ENCODE measurements at regions of chr10 and their contacts with region 1.

Region 1: GRCh38 chr10:123257904-123258456 is 103.8 kb downstream of the BUB3 start:
- DNase-seq: no peak
- H3K4me3 ChIP-seq: no peak overlapping the region
- H3K27ac ChIP-seq: no peak overlapping the region
- H3K4me1 ChIP-seq: no peaks in the 10 kb centered on the region; a peak in 1 of 7 replicates
- H3K27me3 ChIP-seq: no peaks in the 10 kb centered on the region
- CTCF ChIP-seq: no peak
- EP300 ChIP-seq: no peak
- POLR2A ChIP-seq: no peak
- RAD21 ChIP-seq: no peak

Region 2: DNA sequence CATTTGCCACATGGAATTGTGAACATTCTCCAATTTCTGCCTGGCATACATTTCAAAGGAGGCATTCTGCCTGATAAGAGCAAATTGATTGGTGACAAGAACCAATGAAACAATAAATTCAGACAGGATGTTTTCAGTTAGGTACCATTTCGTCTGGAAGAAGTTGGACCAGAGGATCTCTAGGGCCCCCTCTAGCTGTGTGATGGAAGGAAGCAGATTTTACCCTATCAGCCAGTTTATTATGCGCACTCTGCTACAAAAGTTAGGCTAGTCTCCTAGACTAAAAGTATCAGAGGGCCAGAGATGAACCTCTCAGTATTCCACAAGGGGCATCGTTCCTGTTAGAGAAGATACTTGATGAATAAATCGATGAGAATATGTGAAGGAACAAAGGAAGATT is 14.2 kb after region 1 on chr10:
- CTCF ChIA-PET with region 1: interaction called, 11 read pairs
- POLR2A ChIA-PET with region 1: no interaction called
- DNase-seq: no peak
- H3K4me3 ChIP-seq: no peak overlapping the region
- H3K27ac ChIP-seq: no peak overlapping the region
- H3K4me1 ChIP-seq: peaks cover 0 to 6% (median 0%) of the 10 kb centered on the region in 4 experiments; a peak in 2 of 7 replicates
- H3K27me3 ChIP-seq: no peaks in the 10 kb centered on the region
- CTCF ChIP-seq: peak in 1 of 3 experiments; percentile 45; a peak in 1 of 4 replicates
- EP300 ChIP-seq: no peak
- POLR2A ChIP-seq: no peak
- RAD21 ChIP-seq: peak; percentile 20 to 27; a peak in 2 of 4 replicates

Measured in H1 (cell line).